Testis (tissue), 5 donors: ENCODE measurements at regions of chr3 and their contacts with region 1.

Region 1: DNA sequence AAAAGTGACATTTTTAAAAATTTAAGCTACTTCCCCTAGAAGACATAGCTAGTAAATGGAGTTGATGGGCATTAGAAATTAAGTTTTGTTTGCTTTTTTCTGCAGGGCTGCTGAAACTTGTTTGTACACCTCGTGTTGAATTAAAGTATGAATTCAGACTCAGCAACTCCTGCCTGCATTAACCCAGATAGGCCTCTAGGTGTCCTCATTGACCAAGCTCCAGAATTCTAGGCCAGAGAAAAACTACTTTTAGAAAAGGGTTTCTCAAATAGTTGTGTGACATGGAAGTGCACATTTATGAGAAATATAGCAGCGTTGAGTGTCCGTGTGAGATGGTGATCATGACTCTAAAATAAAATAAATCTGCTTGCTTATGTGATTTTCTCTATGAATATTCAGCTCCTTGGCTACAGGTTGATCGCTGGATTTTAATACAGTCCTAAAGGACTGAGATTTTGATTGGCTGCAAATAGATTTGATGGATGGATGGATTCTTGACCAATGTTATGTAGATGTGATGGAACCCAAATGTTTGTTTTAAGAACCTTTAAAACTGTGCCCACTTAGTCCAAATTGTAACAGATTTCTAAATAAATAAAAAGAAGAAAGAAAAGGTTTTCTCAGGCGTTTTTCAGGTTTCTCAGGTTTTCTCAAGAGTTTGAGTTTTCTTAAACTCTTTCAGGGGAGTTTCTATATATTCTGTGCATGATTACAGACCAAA is 39.4 kb upstream of the LMOD3 start:
- DNase-seq: peak; percentile 45
- H3K4me3 ChIP-seq: no peak overlapping the region
- H3K27ac ChIP-seq: no peak overlapping the region
- H3K4me1 ChIP-seq: no peaks in the 10 kb centered on the region
- H3K27me3 ChIP-seq: no peaks in the 10 kb centered on the region
- CTCF ChIP-seq: peak; percentile 85 to 95 (median 92)
- POLR2A ChIP-seq: no peak

Region 2: GRCh38 chr3:69294014-69294775 is 132.4 kb after region 1 on chr3:
- intact Hi-C with region 1: loop called (anchors 10 kb)
- DNase-seq: no peak
- H3K4me3 ChIP-seq: no peak overlapping the region
- H3K27ac ChIP-seq: peak overlapping the region in 1 of 2 donors; percentile 48
- H3K4me1 ChIP-seq: peaks cover 12% of the 10 kb centered on the region
- H3K27me3 ChIP-seq: no peaks in the 10 kb centered on the region
- CTCF ChIP-seq: no peak
- POLR2A ChIP-seq: no peak

Region 3: GRCh38 chr3:69425261-69425660 is 263.5 kb after region 1 on chr3:
- intact Hi-C with region 1: loop called (anchors 10 kb)
- DNase-seq: peak; percentile 27
- H3K4me3 ChIP-seq: no peak overlapping the region
- H3K27ac ChIP-seq: no peak overlapping the region
- H3K4me1 ChIP-seq: no peaks in the 10 kb centered on the region
- H3K27me3 ChIP-seq: no peaks in the 10 kb centered on the region
- CTCF ChIP-seq: peak in 2 of 3 experiments; percentile 32 to 40
- POLR2A ChIP-seq: no peak

Region 4: GRCh38 chr3:69671082-69671952 is 509.6 kb after region 1 on chr3:
- intact Hi-C with region 1: loop called (anchors 10 kb)
- DNase-seq: peak; percentile 58
- H3K4me3 ChIP-seq: no peak overlapping the region
- H3K27ac ChIP-seq: no peak overlapping the region
- H3K4me1 ChIP-seq: peaks cover 6% of the 10 kb centered on the region
- H3K27me3 ChIP-seq: no peaks in the 10 kb centered on the region
- CTCF ChIP-seq: peak; percentile 46 to 76 (median 63)
- POLR2A ChIP-seq: no peak